Ascending aorta (tissue), 2 donors: ENCODE measurements at regions of chr12 and their contacts with region 1.

Region 1: DNA sequence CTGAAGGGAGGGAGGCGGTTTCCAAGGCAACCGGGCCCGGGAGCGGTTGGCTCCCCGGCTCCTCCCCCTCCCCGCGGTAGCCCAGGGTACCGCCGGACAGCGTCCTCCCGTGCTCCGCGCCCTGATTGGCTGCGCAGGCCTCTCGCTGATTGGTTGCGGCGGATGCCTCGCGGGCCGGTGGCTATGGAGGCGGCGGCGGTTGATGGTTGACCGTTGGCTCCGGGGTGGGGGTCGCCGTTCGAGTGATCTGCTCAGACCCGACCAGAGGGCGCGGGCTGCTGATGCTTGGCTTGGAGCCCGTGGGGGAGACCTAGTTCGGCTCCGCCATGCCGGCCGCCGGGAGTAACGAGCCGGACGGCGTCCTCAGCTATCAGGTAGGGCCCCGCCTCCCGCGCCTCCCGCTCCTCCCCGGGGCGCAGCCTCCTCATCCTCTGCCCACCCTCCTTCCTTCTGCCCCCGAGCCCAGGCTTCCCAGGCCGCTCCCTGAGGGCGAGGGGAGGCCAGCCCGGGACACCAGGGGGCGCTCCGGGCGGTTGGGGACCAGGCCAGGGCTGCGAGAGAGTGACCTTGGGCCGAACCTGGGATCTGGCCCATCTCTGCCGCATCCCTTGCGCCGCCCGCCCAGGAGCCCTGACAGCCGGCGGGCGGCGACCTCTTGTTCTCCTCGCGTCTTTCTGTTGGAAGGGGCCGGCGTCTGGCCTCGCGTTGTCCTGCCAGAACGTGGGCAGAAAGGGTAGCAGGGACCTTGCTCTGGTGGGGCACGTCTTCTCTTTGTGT is at the start of gene SLC4A8:
- DNase-seq: peak; percentile 31 to 84
- H3K4me3 ChIP-seq: peak within 1 kb of the TSS; percentile 55 to 78
- H3K27ac ChIP-seq: no peak within 1 kb of the TSS
- H3K4me1 ChIP-seq: peaks cover 5 to 8% of the 10 kb centered on the region in 2 donors
- H3K27me3 ChIP-seq: no peaks in the 10 kb centered on the region
- CTCF ChIP-seq: peak; percentile 59 to 78 (median 62)
- total RNA-seq, gene SLC4A8: not detected

Region 2: DNA sequence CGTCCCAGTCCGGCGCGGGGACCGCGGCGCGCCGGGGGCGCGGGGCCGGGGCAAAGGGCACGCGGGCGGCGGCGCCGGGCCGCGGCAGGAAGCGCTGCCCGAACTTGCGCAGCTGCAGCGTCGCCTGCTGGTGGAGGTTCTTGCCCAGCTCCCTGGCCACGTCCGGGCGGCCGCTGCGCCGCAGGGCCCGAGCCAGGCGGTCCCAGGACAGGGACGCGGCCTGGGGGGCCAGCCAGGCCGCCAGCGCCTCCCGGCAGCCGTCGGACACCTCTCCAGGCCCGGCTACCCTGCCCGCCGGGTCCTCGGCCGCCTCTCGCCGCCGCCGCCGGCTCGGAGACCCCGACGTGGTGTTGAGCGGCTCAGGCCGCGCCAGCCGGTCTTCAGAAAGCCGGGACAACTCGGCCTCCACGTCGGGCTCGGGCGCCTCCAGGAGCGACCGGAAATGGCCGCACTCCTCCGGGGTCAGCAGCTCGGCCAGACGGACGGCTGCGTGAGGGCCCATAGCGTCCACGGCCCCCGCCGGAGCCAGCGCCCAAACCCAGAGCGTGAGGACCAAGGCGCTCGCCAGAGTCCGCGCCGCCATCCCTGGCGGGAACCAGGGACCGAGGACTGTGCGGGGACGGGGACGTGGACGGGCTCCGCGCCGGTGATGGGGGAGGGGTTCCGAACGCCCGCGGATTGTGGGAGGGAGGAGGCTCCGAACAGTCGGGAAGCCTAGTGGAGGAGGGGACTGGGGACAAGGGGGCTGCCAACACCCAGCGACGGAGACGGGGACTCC is 389.6 kb after region 1 on chr12:
- intact Hi-C with region 1: loop called (anchors 10 kb)
- DNase-seq: peak in 1 of 2 donors; percentile 73
- H3K4me3 ChIP-seq: peak overlapping the region; percentile 50 to 64
- H3K27ac ChIP-seq: peak overlapping the region; percentile 37 to 56
- H3K4me1 ChIP-seq: no peaks in the 10 kb centered on the region
- H3K27me3 ChIP-seq: no peaks in the 10 kb centered on the region
- CTCF ChIP-seq: peak in 2 of 3 experiments; percentile 41 to 73